ENCODE measurements at regions of chr10 and their contacts with region 1.

Region 1: GRCh38 chr10:124992462-124993344 is 50.8 kb downstream of the ZRANB1 start:
- DNase-seq: peak; percentile 65
- H3K4me3 ChIP-seq: no peak overlapping the region
- H3K27ac ChIP-seq: no peak overlapping the region
- H3K4me1 ChIP-seq: peaks cover 28% of the 10 kb centered on the region
- CTCF ChIP-seq: peak; percentile 79

Region 2: GRCh38 chr10:124612611-124613498 is 379.8 kb before region 1 on chr10:
- CTCF ChIA-PET with region 1: no interaction called
- POLR2A ChIA-PET with region 1: no interaction called
- intact Hi-C with region 1: no loop called
- DNase-seq: peak; percentile 46
- H3K4me3 ChIP-seq: no peak overlapping the region
- H3K27ac ChIP-seq: no peak overlapping the region
- H3K4me1 ChIP-seq: peaks cover 29% of the 10 kb centered on the region
- CTCF ChIP-seq: no peak

Region 3: GRCh38 chr10:125060826-125061556 is 68.3 kb after region 1 on chr10:
- CTCF ChIA-PET with region 1: interaction called, 7 read pairs
- POLR2A ChIA-PET with region 1: interaction called, 4 read pairs
- intact Hi-C with region 1: loop called (anchors 1 kb)
- DNase-seq: peak; percentile 73
- H3K4me3 ChIP-seq: peak overlapping the region; percentile 37
- H3K27ac ChIP-seq: peak overlapping the region; percentile 8
- H3K4me1 ChIP-seq: peaks cover 61% of the 10 kb centered on the region
- CTCF ChIP-seq: peak; percentile 89

Measured in OCI-LY7 (cell line).